Activated CD4-positive, alpha-beta T cell treated with anti-CD3 and anti-CD28 coated beads for 36 hours (primary cell): ENCODE measurements at regions of chr9 and their contacts with region 1.

Region 1: GRCh38 chr9:77149879-77150278 is 27.5 kb upstream of the VPS13A start:
- DNase-seq: no peak
- ATAC-seq: no peak
- H3K4me3 Mint-ChIP-seq: no peak overlapping the region
- H3K27ac Mint-ChIP-seq: no peak overlapping the region
- H3K4me1 Mint-ChIP-seq: no peaks in the 10 kb centered on the region
- H3K27me3 Mint-ChIP-seq: peaks cover 6% of the 10 kb centered on the region

Region 2: DNA sequence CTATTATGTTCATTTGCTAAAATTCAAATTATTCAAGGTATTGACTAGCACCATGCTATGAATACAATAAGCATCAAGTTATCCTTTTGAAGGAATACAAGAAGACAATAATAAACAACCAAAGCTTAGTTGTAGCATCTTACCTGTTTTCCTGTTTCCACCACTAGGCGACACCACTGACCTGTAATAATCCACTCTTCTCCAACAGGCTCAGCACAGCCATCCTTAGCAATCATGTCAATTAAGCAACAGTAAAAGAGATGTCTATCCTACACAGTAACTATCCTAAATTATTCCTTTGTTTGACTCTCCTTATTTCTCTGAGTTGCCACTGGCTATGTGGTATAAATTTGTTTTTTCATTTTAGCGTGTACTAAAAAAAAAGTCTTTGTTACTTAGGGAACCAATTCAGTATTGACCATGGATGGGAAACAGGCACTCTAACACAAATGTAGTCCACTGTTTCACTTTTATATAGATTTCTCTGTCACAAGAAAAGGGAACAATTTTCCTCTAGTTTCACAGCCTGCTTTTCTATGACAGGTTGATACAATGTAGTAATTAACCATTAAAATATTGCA is 339.4 kb before region 1 on chr9:
- CTCF ChIA-PET with region 1: interaction called, 8 read pairs
- POLR2A ChIA-PET with region 1: no interaction called
- intact Hi-C with region 1: loop called (anchors 1 to 2 kb)
- DNase-seq: peak; percentile 58
- ATAC-seq: no peak
- H3K4me3 Mint-ChIP-seq: no peak overlapping the region
- H3K27ac Mint-ChIP-seq: no peak overlapping the region
- H3K4me1 Mint-ChIP-seq: no peaks in the 10 kb centered on the region
- H3K27me3 Mint-ChIP-seq: peaks cover 13% of the 10 kb centered on the region

Region 3: GRCh38 chr9:77011973-77012821 is 137.7 kb before region 1 on chr9:
- CTCF ChIA-PET with region 1: no interaction called
- POLR2A ChIA-PET with region 1: no interaction called
- intact Hi-C with region 1: loop called in 1 of 2 experiments (anchors 2 kb)
- DNase-seq: peak; percentile 86
- ATAC-seq: peak; percentile 77
- H3K4me3 Mint-ChIP-seq: peak overlapping the region; percentile 46
- H3K27ac Mint-ChIP-seq: no peak overlapping the region
- H3K4me1 Mint-ChIP-seq: peaks cover 17% of the 10 kb centered on the region
- H3K27me3 Mint-ChIP-seq: peaks cover 64% of the 10 kb centered on the region

Region 4: GRCh38 chr9:77020438-77021290 is 129.2 kb before region 1 on chr9:
- CTCF ChIA-PET with region 1: no interaction called
- POLR2A ChIA-PET with region 1: no interaction called
- intact Hi-C with region 1: loop called in 1 of 2 experiments (anchors 5 kb)
- DNase-seq: peak; percentile 33
- ATAC-seq: peak; percentile 23
- H3K4me3 Mint-ChIP-seq: no peak overlapping the region
- H3K27ac Mint-ChIP-seq: no peak overlapping the region
- H3K4me1 Mint-ChIP-seq: peaks cover 32% of the 10 kb centered on the region
- H3K27me3 Mint-ChIP-seq: peaks cover 68% of the 10 kb centered on the region

Region 5: GRCh38 chr9:77163884-77164283 is 14.0 kb after region 1 on chr9:
- CTCF ChIA-PET with region 1: interaction called, 12 read pairs
- POLR2A ChIA-PET with region 1: no interaction called
- intact Hi-C with region 1: no loop called
- DNase-seq: no peak
- ATAC-seq: no peak
- H3K4me3 Mint-ChIP-seq: no peak overlapping the region
- H3K27ac Mint-ChIP-seq: no peak overlapping the region
- H3K4me1 Mint-ChIP-seq: peaks cover 1% of the 10 kb centered on the region
- H3K27me3 Mint-ChIP-seq: peaks cover 4% of the 10 kb centered on the region